ENCODE measurements at regions of chr15 and their contacts with region 1.

Region 1: DNA sequence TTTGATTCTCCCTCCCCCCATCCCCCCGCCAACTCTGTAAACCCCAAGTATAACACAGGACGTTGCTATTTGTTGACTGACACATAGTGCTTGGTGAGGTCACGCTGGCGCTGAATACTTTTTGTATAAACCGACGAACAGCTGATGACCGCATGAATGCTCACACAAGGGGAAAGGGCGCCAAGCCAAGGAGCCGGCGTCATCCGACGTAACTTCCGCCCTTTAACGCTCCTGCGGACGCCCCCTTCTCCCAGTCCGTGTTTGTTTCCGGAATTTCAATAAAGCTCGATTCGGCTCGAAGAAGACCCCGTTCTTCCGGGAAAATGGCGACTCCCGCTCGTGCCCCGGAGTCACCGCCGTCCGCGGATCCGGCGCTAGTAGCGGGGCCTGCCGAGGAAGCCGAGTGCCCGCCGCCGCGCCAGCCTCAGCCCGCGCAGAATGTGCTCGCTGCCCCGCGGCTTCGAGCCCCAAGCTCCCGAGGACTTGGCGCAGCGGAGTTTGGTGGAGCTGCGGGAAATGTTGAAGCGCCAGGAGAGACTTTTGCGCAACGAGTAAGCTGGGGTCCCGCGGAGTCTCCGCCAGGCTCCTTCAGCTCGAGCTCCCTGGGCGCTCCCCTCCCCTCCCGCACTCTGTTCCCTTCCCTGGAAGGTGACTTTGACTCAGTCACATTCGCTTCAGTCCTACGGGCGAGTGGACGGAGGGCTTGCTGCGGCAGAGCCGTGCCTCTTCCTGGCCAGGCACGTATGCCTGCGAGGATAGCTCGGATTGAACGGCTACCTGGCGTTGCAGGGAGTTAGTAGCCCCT is at the start of gene POLR2M:
- DNase-seq: peak; percentile 88 to 92
- H3K4me3 ChIP-seq: peak within 1 kb of the TSS; percentile 98
- H3K4me3 Mint-ChIP-seq: peak within 1 kb of the TSS; percentile 81
- H3K27ac Mint-ChIP-seq: peak within 1 kb of the TSS; percentile 82
- H3K4me1 ChIP-seq: peaks cover 10% of the 10 kb centered on the region; the same call in 1 of the 2 replicates
- H3K4me1 Mint-ChIP-seq: peaks cover 8% of the 10 kb centered on the region
- H3K27me3 ChIP-seq: no peaks in the 10 kb centered on the region
- H3K27me3 Mint-ChIP-seq: no peaks in the 10 kb centered on the region
- CTCF ChIP-seq: no peak
- total RNA-seq, gene POLR2M: 74.7 and 81.6 TPM in 2 replicates

Region 2: GRCh38 chr15:57667171-57667849 is 39.3 kb before region 1 on chr15:
- CTCF ChIA-PET with region 1: no interaction called
- POLR2A ChIA-PET with region 1: interaction called, 6 read pairs
- intact Hi-C with region 1: loop called (anchors 1 kb)
- DNase-seq: peak; percentile 47 to 65
- H3K4me3 ChIP-seq: peak overlapping the region; percentile 24
- H3K4me3 Mint-ChIP-seq: peak overlapping the region; percentile 41
- H3K27ac Mint-ChIP-seq: no peak overlapping the region
- H3K4me1 ChIP-seq: peaks cover 20% of the 10 kb centered on the region
- H3K4me1 Mint-ChIP-seq: peaks cover 9% of the 10 kb centered on the region
- H3K27me3 ChIP-seq: no peaks in the 10 kb centered on the region
- H3K27me3 Mint-ChIP-seq: no peaks in the 10 kb centered on the region
- CTCF ChIP-seq: peak; percentile 46 to 54

Region 3: DNA sequence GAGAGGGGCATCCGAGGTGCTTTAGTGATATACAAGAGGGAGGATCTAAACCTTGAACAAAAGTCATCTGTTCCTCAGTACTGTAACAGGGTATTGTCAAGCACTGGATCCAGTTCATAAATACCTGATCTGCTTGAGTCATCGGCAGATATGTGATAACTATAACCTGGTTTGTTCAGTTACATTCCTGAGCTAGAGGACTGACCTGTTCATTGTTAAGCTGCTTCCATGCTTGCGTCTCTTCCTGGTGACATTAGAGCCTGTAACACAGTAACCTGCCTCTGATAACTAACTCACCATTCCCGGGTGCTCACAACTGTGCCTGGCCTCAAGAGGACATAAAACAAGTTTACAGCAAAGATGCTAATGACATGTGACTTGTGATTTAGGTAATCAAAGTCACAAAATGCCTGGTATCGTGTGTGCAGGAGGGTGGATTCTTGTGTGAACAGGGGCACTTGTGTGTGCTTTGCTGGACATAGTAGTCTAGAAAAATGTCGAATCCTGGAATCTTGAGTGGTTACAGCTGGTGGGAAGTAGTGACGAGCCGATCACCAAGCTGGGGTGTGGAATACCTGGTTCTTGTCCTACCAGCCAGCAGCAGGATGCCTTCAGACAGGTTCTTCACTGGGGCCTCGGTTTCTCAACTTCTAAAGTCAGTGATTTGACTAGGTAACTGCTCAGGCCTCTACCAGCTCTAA is 31.0 kb before region 1 on chr15:
- CTCF ChIA-PET with region 1: interaction called, 3 read pairs
- POLR2A ChIA-PET with region 1: interaction called, 7 read pairs
- intact Hi-C with region 1: loop called (anchors 1 kb)
- DNase-seq: peak; percentile 54 to 64
- H3K4me3 ChIP-seq: no peak overlapping the region
- H3K4me3 Mint-ChIP-seq: peak overlapping the region; percentile 33
- H3K27ac Mint-ChIP-seq: peak overlapping the region; percentile 58
- H3K4me1 ChIP-seq: peaks cover 15% of the 10 kb centered on the region
- H3K4me1 Mint-ChIP-seq: peaks cover 28% of the 10 kb centered on the region
- H3K27me3 ChIP-seq: no peaks in the 10 kb centered on the region
- H3K27me3 Mint-ChIP-seq: no peaks in the 10 kb centered on the region
- CTCF ChIP-seq: no peak

Region 4: DNA sequence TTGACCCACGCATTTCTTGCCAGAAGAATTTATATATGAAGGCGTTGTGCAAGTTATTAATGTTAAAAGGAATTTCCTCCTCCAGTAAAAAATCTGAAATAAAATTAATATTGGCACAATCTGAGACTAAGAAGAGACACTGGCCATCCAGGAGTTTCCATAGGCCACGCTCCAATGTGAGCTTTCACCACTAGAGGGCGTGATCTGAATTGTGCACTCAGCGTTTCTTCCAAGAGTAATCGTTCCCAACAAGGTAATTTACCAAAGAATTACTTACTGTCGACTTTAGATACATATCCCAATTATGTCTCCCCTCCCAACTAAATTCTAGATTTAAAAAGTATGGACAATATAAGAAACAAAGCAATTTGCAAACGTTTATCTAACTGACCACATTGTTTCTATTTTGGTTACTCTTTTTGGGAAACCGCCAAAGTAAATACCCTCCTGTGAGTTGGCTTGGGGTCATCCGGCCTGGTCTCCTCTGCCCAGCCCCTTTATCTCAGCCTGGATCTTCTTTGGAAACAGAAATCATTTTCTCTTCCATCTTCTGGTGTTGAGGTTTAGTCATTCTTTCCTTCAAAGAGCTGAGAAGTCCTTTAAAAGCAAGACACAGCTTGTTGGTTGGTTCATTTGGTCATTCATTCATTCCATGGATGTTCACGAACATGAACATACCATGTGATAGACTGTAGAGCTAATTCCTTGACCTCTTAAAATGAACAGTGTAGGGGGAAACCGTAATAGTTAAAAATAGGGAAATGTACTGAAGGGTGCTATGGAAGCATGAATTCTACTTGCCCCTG is 26.1 kb after region 1 on chr15:
- CTCF ChIA-PET with region 1: interaction called, 15 read pairs
- POLR2A ChIA-PET with region 1: no interaction called
- intact Hi-C with region 1: no loop called
- DNase-seq: peak in 1 of 2 experiments; percentile 66
- H3K4me3 ChIP-seq: no peak overlapping the region
- H3K4me3 Mint-ChIP-seq: no peak overlapping the region
- H3K27ac Mint-ChIP-seq: no peak overlapping the region
- H3K4me1 ChIP-seq: no peaks in the 10 kb centered on the region
- H3K4me1 Mint-ChIP-seq: no peaks in the 10 kb centered on the region
- H3K27me3 ChIP-seq: no peaks in the 10 kb centered on the region
- H3K27me3 Mint-ChIP-seq: no peaks in the 10 kb centered on the region
- CTCF ChIP-seq: peak; percentile 68 to 76

Region 5: GRCh38 chr15:57947781-57948180 is 241.2 kb after region 1 on chr15:
- CTCF ChIA-PET with region 1: no interaction called
- POLR2A ChIA-PET with region 1: no interaction called
- intact Hi-C with region 1: no loop called
- DNase-seq: no peak
- H3K4me3 ChIP-seq: no peak overlapping the region
- H3K4me3 Mint-ChIP-seq: no peak overlapping the region
- H3K27ac Mint-ChIP-seq: no peak overlapping the region
- H3K4me1 ChIP-seq: no peaks in the 10 kb centered on the region
- H3K4me1 Mint-ChIP-seq: no peaks in the 10 kb centered on the region
- H3K27me3 ChIP-seq: peaks cover 2% of the 10 kb centered on the region; the same call in 1 of the 2 replicates
- H3K27me3 Mint-ChIP-seq: peaks cover 28% of the 10 kb centered on the region
- CTCF ChIP-seq: no peak

Measured in Caco-2 (cell line).